ENCODE measurements at regions of chr20 and their contacts with region 1.

Region 1: DNA sequence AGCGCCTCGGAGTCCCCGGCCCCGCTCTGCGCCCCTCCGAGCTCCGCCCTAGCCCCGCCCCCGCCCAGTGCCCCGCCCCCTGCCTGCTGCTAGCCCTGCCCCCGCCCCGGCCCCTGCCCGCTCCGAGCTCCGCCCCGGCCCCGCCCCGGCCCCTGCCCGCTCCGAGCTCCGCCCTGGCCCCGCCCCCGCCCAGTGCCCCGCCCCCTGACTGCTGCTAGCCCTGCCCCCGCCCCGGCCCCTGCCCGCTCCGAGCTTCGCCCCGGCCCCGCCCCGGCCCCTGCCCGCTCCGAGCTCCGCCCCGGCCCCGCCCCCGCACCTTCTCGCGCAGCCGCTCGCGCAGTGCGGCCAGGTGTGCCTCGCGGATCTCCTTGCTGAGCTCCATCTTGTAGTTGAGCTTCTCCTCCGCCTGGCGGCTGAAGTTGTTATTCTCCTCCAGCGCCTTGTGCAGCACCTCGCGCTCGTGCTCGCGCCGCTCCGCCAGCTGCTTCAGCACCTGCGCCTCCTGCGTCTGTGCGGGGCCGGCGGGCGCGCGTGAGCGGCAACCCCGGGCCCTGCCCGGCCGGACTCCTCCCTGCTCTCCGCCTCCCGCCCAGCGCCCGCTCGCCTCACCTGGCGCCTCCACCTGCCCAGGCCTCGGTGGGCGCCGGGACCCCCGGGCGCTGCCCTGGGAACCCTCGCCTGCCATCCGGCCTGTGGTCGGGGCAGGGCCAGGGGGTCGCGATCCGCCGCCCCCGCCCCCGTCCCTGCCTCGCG is 11.3 kb downstream of the STMN3 start:
- DNase-seq: peak; percentile 87 to 99 (median 98)
- ATAC-seq: peak; percentile 68 to 70
- H3K4me3 Mint-ChIP-seq: peak overlapping the region; percentile 46 to 93 (median 74)
- H3K27ac Mint-ChIP-seq: peak overlapping the region in 8 of 10 donors; percentile 37 to 94 (median 83)
- H3K4me1 Mint-ChIP-seq: peaks cover 23 to 40% (median 38%) of the 10 kb centered on the region in 4 donors
- H3K27me3 Mint-ChIP-seq: no peaks in the 10 kb centered on the region

Region 2: GRCh38 chr20:63537525-63538203 is 104.3 kb before region 1 on chr20:
- POLR2A ChIA-PET with region 1: interaction called, 16 read pairs
- DNase-seq: peak; percentile 86 to 96 (median 93)
- ATAC-seq: peak; percentile 91
- H3K4me3 Mint-ChIP-seq: peak overlapping the region; percentile 62 to 82 (median 71)
- H3K27ac Mint-ChIP-seq: peak overlapping the region in 9 of 10 donors; percentile 31 to 93 (median 86)
- H3K4me1 Mint-ChIP-seq: peaks cover 8 to 22% (median 15%) of the 10 kb centered on the region in 4 donors
- H3K27me3 Mint-ChIP-seq: no peaks in the 10 kb centered on the region

Region 3: GRCh38 chr20:63617092-63617865 is 24.7 kb before region 1 on chr20:
- POLR2A ChIA-PET with region 1: interaction called, 740 read pairs
- DNase-seq: no peak
- ATAC-seq: no peak
- H3K4me3 Mint-ChIP-seq: no peak overlapping the region
- H3K27ac Mint-ChIP-seq: no peak overlapping the region
- H3K4me1 Mint-ChIP-seq: peaks cover 7 to 33% (median 23%) of the 10 kb centered on the region in 4 donors
- H3K27me3 Mint-ChIP-seq: no peaks in the 10 kb centered on the region

Region 4: GRCh38 chr20:63652168-63653077 is 10.5 kb after region 1 on chr20:
- POLR2A ChIA-PET with region 1: interaction called, 43 read pairs
- DNase-seq: peak in 8 of 10 donors; percentile 47 to 69 (median 58)
- ATAC-seq: peak; percentile 62 to 69
- H3K4me3 Mint-ChIP-seq: peak overlapping the region; percentile 66 to 96 (median 89)
- H3K27ac Mint-ChIP-seq: peak overlapping the region in 7 of 10 donors; percentile 24 to 92 (median 67)
- H3K4me1 Mint-ChIP-seq: peaks cover 20 to 45% (median 32%) of the 10 kb centered on the region in 4 donors
- H3K27me3 Mint-ChIP-seq: no peaks in the 10 kb centered on the region

Measured in naive thymus-derived CD8-positive, alpha-beta T cell (primary cell).